ENCODE measurements at regions of chr7 and their contacts with region 1.

Region 1: DNA sequence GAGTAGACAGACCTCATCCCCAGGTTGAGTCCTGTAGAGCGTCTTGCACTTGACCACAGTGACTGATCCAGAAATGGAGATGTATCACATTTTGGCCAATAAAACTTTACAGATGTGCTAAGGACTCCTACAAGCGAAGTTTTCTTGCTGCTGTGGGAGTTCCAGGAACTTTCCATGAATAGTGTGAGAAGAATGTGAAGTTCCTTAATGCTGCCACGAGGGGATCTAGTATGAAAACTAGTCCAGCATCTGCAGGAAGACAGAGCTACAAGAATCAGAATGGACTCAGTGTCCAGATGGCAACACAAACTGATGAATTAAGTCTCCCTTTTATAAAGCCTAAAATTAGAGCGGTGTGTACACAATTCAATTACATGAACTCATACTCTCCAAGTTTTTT is 14.8 kb upstream of the LSM8 start:
- DNase-seq: peak; percentile 41
- ATAC-seq: no peak
- H3K4me3 ChIP-seq: no peak overlapping the region
- H3K27ac ChIP-seq: no peak overlapping the region
- H3K4me1 ChIP-seq: no peaks in the 10 kb centered on the region; the same call in 1 of the 2 replicates
- H3K27me3 ChIP-seq: no peaks in the 10 kb centered on the region
- CTCF ChIP-seq: 0 out of 2 replicates have a peak, but pooled peaks have one; percentile 11
- POLR2A ChIP-seq: no peak
- RAD21 ChIP-seq: no peak

Region 2: GRCh38 chr7:117435475-117436043 is 733.6 kb before region 1 on chr7:
- CTCF ChIA-PET with region 1: no interaction called
- POLR2A ChIA-PET with region 1: no interaction called
- dilution Hi-C with region 1: no loop called
- in situ Hi-C with region 1: no loop called
- intact Hi-C with region 1: no loop called
- DNase-seq: no peak
- ATAC-seq: no peak
- H3K4me3 ChIP-seq: no peak overlapping the region
- H3K27ac ChIP-seq: no peak overlapping the region
- H3K4me1 ChIP-seq: no peaks in the 10 kb centered on the region
- H3K27me3 ChIP-seq: no peaks in the 10 kb centered on the region; the same call in 1 of the 2 replicates
- CTCF ChIP-seq: no peak
- POLR2A ChIP-seq: no peak
- RAD21 ChIP-seq: no peak

Region 3: DNA sequence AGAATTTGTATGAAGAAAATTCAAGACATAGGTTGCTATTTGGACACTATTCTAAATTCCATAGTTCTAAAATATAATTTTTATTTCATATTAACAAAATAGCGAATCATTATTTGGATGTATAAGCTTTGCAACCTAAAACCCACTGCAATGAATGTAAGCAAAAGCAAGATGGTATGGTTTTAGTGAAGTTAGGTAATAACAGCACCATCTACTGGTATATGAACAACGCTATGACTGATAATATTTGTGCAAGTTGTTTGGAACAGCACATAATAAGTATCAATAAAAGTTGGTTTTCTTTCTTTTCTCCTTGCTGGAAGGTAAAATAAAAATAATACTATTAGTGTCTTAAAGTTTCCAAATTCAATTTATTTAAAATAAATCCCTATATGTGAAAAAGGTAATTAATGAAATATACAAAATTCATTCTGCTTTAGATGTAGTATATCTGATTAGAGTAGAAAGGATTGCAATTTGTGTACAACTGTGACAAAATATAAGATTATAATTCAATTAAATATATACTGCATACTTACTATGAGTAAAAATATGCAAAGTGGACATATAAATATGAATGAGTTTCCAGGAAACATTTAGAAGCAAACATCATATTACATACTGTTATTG is 64.2 kb before region 1 on chr7:
- CTCF ChIA-PET with region 1: no interaction called
- POLR2A ChIA-PET with region 1: no interaction called
- dilution Hi-C with region 1: no loop called
- in situ Hi-C with region 1: no loop called
- intact Hi-C with region 1: loop called (anchors 5 kb)
- DNase-seq: peak; percentile 40
- ATAC-seq: peak; percentile 61
- H3K4me3 ChIP-seq: no peak overlapping the region
- H3K27ac ChIP-seq: no peak overlapping the region
- H3K4me1 ChIP-seq: no peaks in the 10 kb centered on the region
- H3K27me3 ChIP-seq: no peaks in the 10 kb centered on the region
- CTCF ChIP-seq: peak; percentile 58
- POLR2A ChIP-seq: no peak
- RAD21 ChIP-seq: peak; percentile 49

Measured in IMR-90 (cell line).